CD4-positive, alpha-beta memory T cell (primary cell): ENCODE measurements at regions of chr4 and their contacts with region 1.

Region 1: GRCh38 chr4:77044461-77045150 is 31.2 kb downstream of the CCNI start:
- DNase-seq: peak in 4 of 5 donors; percentile 28 to 38 (median 32)
- H3K4me3 ChIP-seq: no peak overlapping the region
- H3K4me3 Mint-ChIP-seq: no peak overlapping the region
- H3K27ac ChIP-seq: no peak overlapping the region
- H3K27ac Mint-ChIP-seq: peak overlapping the region in 6 of 7 donors; percentile 1 to 83 (median 50)
- H3K4me1 ChIP-seq: peaks cover 9% of the 10 kb centered on the region
- H3K4me1 Mint-ChIP-seq: peaks cover 5 to 10% (median 8%) of the 10 kb centered on the region in 4 donors
- H3K27me3 ChIP-seq: no peaks in the 10 kb centered on the region
- H3K27me3 Mint-ChIP-seq: no peaks in the 10 kb centered on the region

Region 2: GRCh38 chr4:76430519-76431388 is 613.9 kb before region 1 on chr4:
- CTCF ChIA-PET with region 1: no interaction called
- POLR2A ChIA-PET with region 1: no interaction called
- intact Hi-C with region 1: loop called (anchors 2 kb)
- DNase-seq: peak in 4 of 5 donors; percentile 15 to 28 (median 18)
- H3K4me3 ChIP-seq: no peak overlapping the region
- H3K4me3 Mint-ChIP-seq: no peak overlapping the region
- H3K27ac ChIP-seq: no peak overlapping the region
- H3K27ac Mint-ChIP-seq: no peak overlapping the region
- H3K4me1 ChIP-seq: no peaks in the 10 kb centered on the region
- H3K4me1 Mint-ChIP-seq: peaks cover 0 to 2% (median under 1%) of the 10 kb centered on the region in 4 donors
- H3K27me3 ChIP-seq: no peaks in the 10 kb centered on the region
- H3K27me3 Mint-ChIP-seq: peaks cover 7 to 8% of the 10 kb centered on the region in 2 donors

Region 3: GRCh38 chr4:76765473-76766183 is 279.0 kb before region 1 on chr4:
- CTCF ChIA-PET with region 1: no interaction called
- POLR2A ChIA-PET with region 1: no interaction called
- intact Hi-C with region 1: loop called (anchors 10 kb)
- DNase-seq: no peak
- H3K4me3 ChIP-seq: no peak overlapping the region
- H3K4me3 Mint-ChIP-seq: no peak overlapping the region
- H3K27ac ChIP-seq: no peak overlapping the region
- H3K27ac Mint-ChIP-seq: no peak overlapping the region
- H3K4me1 ChIP-seq: no peaks in the 10 kb centered on the region
- H3K4me1 Mint-ChIP-seq: peaks cover 0 to 2% (median 0%) of the 10 kb centered on the region in 4 donors
- H3K27me3 ChIP-seq: no peaks in the 10 kb centered on the region
- H3K27me3 Mint-ChIP-seq: peaks cover 13% of the 10 kb centered on the region in 2 donors

Region 4: DNA sequence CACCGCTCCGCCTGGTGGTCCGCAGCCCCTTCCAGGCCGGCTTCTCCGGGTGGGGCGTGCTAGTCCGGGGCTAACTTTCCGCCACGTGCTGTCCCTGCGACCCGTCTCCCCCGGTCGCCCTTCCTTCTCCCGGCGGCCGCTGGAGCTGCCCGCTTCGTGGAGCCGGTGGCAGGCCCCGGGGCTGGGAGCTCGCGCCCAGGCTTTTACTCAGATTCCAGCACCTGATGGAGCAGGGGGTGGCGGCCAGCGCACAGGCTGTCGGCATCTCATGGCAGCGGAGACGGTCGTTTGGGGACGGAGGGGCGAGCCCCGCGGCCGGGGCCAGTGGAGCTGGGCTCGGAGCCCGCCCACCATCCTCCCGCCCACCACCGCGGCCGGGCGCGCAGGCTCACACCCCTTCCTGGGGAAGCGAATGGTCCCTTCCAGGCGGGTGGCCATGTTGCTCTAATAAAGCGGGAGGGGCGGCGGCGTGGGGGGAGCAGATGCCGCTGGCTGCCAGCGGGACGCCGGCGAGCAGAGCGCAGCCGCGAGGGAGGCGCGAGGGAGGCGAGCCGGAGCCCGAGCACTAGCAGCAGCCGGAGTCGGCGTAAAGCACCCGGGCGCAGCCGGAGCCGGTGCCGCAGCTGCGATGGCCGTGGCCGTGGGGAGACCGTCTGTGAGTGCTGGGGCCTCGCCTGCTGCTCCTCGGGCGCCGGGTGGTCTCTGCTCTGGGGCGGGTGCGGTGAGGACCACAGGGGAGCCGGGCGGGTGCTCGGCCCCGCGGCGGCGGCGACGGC is 95.1 kb before region 1 on chr4 and contains the start of gene SEPTIN11:
- CTCF ChIA-PET with region 1: interaction called, 4 read pairs
- POLR2A ChIA-PET with region 1: interaction called, 8 read pairs
- intact Hi-C with region 1: loop called (anchors 1 kb)
- DNase-seq: peak; percentile 83 to 90 (median 85)
- H3K4me3 ChIP-seq: peak within 1 kb of the TSS; percentile 83 to 86
- H3K4me3 Mint-ChIP-seq: peak within 1 kb of the TSS; percentile 90 to 94 (median 93)
- H3K27ac ChIP-seq: peak within 1 kb of the TSS; percentile 59
- H3K27ac Mint-ChIP-seq: peak within 1 kb of the TSS; percentile 79 to 94 (median 91)
- H3K4me1 ChIP-seq: peaks cover 23% of the 10 kb centered on the region
- H3K4me1 Mint-ChIP-seq: peaks cover 8 to 41% (median 23%) of the 10 kb centered on the region in 4 donors
- H3K27me3 ChIP-seq: no peaks in the 10 kb centered on the region
- H3K27me3 Mint-ChIP-seq: no peaks in the 10 kb centered on the region
- total RNA-seq, gene SEPTIN11: 25.2 to 30.2 TPM

Region 5: GRCh38 chr4:76993787-76994641 is 50.6 kb before region 1 on chr4:
- CTCF ChIA-PET with region 1: interaction called, 36 read pairs
- POLR2A ChIA-PET with region 1: interaction called, 5 read pairs
- intact Hi-C with region 1: loop called (anchors 1 kb)
- DNase-seq: peak; percentile 75 to 89 (median 80)
- H3K4me3 ChIP-seq: peak overlapping the region in 1 of 2 donors; percentile 5
- H3K4me3 Mint-ChIP-seq: peak overlapping the region; percentile 71 to 88 (median 81)
- H3K27ac ChIP-seq: no peak overlapping the region
- H3K27ac Mint-ChIP-seq: peak overlapping the region; percentile 83 to 96 (median 90)
- H3K4me1 ChIP-seq: peaks cover 64% of the 10 kb centered on the region
- H3K4me1 Mint-ChIP-seq: peaks cover 39 to 65% (median 51%) of the 10 kb centered on the region in 4 donors
- H3K27me3 ChIP-seq: no peaks in the 10 kb centered on the region
- H3K27me3 Mint-ChIP-seq: peaks cover 0 to 1% of the 10 kb centered on the region in 2 donors

Region 6: GRCh38 chr4:77031544-77031943 is 13.1 kb before region 1 on chr4:
- CTCF ChIA-PET with region 1: interaction called, 55 read pairs
- POLR2A ChIA-PET with region 1: interaction called, 5 read pairs
- intact Hi-C with region 1: loop called (anchors 1 kb)
- DNase-seq: peak in 4 of 5 donors; percentile 15 to 43 (median 29)
- H3K4me3 ChIP-seq: no peak overlapping the region
- H3K4me3 Mint-ChIP-seq: peak overlapping the region in 5 of 8 donors; percentile 8 to 55 (median 37)
- H3K27ac ChIP-seq: no peak overlapping the region
- H3K27ac Mint-ChIP-seq: peak overlapping the region; percentile 19 to 73 (median 60)
- H3K4me1 ChIP-seq: peaks cover 28% of the 10 kb centered on the region
- H3K4me1 Mint-ChIP-seq: peaks cover 26 to 32% (median 29%) of the 10 kb centered on the region in 4 donors
- H3K27me3 ChIP-seq: no peaks in the 10 kb centered on the region
- H3K27me3 Mint-ChIP-seq: no peaks in the 10 kb centered on the region